ENCODE measurements at regions of chr11 and their contacts with region 1.

Region 1: DNA sequence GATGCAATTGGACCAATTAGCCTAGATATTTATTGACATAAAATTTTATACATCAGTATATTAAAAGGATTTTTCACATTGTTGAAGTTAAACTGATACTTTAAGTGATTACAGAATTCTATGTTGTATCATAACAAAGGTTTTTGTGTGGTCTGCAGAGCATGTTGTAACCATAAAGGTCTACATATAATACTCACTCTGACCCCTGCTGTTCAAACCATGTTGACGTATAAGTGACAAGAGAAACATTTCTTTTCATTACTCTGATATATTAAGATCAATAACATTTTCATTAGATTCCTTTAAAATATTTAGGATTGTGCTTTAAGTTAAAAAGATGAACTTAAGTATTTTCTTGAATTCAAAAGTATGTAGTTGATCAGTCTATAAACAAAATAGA is 63.9 kb downstream of the GAS2 start:
- DNase-seq: peak; percentile 11
- ATAC-seq: no peak
- H3K4me3 Mint-ChIP-seq: no peak overlapping the region
- H3K27ac Mint-ChIP-seq: no peak overlapping the region
- H3K4me1 Mint-ChIP-seq: no peaks in the 10 kb centered on the region
- H3K27me3 Mint-ChIP-seq: no peaks in the 10 kb centered on the region
- CTCF ChIP-seq: peak; percentile 32

Region 2: GRCh38 chr11:22670830-22671229 is 59.5 kb before region 1 on chr11:
- CTCF ChIA-PET with region 1: interaction called, 4 read pairs
- POLR2A ChIA-PET with region 1: no interaction called
- intact Hi-C with region 1: loop called (anchors 5 kb)
- DNase-seq: no peak
- ATAC-seq: no peak
- H3K4me3 Mint-ChIP-seq: no peak overlapping the region
- H3K27ac Mint-ChIP-seq: no peak overlapping the region
- H3K4me1 Mint-ChIP-seq: peaks cover 19% of the 10 kb centered on the region
- H3K27me3 Mint-ChIP-seq: peaks cover 45% of the 10 kb centered on the region
- CTCF ChIP-seq: peak; percentile 27

Measured in activated CD8-positive, alpha-beta T cell treated with anti-CD3 and anti-CD28 coated beads for 36 hours (primary cell).